Breast epithelium (tissue), 4 donors: ENCODE measurements at regions of chr16 and their contacts with region 1.

Region 1: GRCh38 chr16:72927199-72928089 is 120.5 kb downstream of the ZFHX3 start:
- DNase-seq: peak; percentile 59 to 73
- H3K4me3 ChIP-seq: peak overlapping the region in 2 of 3 donors; percentile 19 to 47
- H3K27ac ChIP-seq: no peak overlapping the region
- H3K4me1 ChIP-seq: peaks cover 0 to 4% of the 10 kb centered on the region in 2 donors
- H3K27me3 ChIP-seq: no peaks in the 10 kb centered on the region
- CTCF ChIP-seq: no peak
- POLR2A ChIP-seq: no peak

Region 2: DNA sequence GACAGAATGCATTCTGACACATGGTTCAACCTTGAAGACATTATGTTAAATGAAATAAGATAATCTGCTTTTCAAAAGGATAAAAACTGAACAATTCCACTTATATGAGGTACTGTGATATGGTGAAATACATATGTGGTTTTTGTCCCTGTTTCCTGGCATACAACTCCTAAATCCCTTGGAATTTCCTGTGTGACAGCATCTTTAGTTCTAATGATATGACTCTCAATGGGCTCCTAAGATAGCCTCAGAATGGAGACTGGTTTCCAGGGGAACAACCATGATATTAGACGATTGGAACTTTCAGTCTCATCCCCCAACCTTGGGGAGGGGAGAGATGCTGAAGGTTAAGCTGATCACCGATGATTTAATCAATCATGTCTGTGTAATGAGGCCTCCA is 1165.3 kb before region 1 on chr16:
- intact Hi-C with region 1: no loop called
- DNase-seq: no peak
- H3K4me3 ChIP-seq: no peak overlapping the region
- H3K27ac ChIP-seq: no peak overlapping the region
- H3K4me1 ChIP-seq: no peaks in the 10 kb centered on the region
- H3K27me3 ChIP-seq: no peaks in the 10 kb centered on the region
- CTCF ChIP-seq: no peak
- POLR2A ChIP-seq: no peak

Region 3: GRCh38 chr16:71974068-71974818 is 953.2 kb before region 1 on chr16:
- intact Hi-C with region 1: loop called (anchors 5 kb)
- DNase-seq: no peak
- H3K4me3 ChIP-seq: no peak overlapping the region
- H3K27ac ChIP-seq: no peak overlapping the region
- H3K4me1 ChIP-seq: no peaks in the 10 kb centered on the region
- H3K27me3 ChIP-seq: no peaks in the 10 kb centered on the region
- CTCF ChIP-seq: no peak
- POLR2A ChIP-seq: no peak

Region 4: DNA sequence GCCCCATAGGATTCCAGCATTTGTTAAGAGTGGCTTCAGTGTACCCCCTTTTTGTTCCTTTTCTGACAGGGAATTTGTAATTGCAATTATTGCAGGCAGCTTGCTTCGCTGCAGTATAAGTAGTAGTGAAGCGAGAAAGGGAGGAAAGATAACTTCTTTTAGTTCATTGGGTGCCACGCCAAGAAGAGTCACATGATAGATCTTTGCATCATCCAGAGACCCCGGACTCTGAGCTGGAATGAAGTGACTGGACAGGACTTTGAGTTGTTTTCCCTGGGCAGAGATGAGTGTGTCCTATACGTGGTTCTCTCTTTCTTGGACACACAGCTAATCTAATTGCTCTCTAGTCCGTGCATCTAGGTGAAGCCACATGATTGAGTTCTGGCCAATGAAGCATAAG is 710.7 kb before region 1 on chr16:
- intact Hi-C with region 1: no loop called
- DNase-seq: no peak
- H3K4me3 ChIP-seq: no peak overlapping the region
- H3K27ac ChIP-seq: no peak overlapping the region
- H3K4me1 ChIP-seq: no peaks in the 10 kb centered on the region
- H3K27me3 ChIP-seq: no peaks in the 10 kb centered on the region
- CTCF ChIP-seq: no peak
- POLR2A ChIP-seq: no peak

Region 5: GRCh38 chr16:72878301-72879269 is 48.9 kb before region 1 on chr16:
- intact Hi-C with region 1: no loop called
- DNase-seq: no peak
- H3K4me3 ChIP-seq: no peak overlapping the region
- H3K27ac ChIP-seq: peak overlapping the region in 1 of 2 donors; percentile 44
- H3K4me1 ChIP-seq: peaks cover 0 to 2% of the 10 kb centered on the region in 2 donors
- H3K27me3 ChIP-seq: no peaks in the 10 kb centered on the region
- CTCF ChIP-seq: no peak
- POLR2A ChIP-seq: no peak